GM23248 (cell line): ENCODE measurements at regions of chr10 and their contacts with region 1.

Region 1: DNA sequence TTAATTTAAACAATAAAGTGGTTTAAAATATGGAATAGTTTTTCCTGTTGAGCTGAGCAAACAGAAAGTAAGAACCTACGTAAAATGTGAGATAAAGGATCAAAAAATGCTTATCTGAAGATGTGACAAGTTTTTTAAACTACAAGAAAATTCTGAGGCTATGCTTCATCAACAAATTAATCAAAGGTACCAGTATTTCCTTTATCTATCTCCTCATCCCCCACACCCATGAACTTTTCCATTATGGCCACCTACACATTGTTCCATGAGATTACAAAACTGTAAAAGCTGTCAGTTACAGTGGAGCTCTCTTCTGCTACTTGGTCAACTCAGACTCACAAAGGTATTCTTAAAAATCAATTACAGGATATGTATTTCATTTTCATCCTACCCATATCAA is 77.4 kb downstream of the ARHGAP12 start:
- DNase-seq: no peak
- H3K4me3 ChIP-seq: no peak overlapping the region
- H3K27ac ChIP-seq: no peak overlapping the region
- H3K4me1 ChIP-seq: no peaks in the 10 kb centered on the region
- H3K27me3 ChIP-seq: no peaks in the 10 kb centered on the region

Region 2: GRCh38 chr10:32005050-32005449 is 153.8 kb after region 1 on chr10:
- in situ Hi-C with region 1: loop called (anchors 10 kb)
- DNase-seq: peak; percentile 60
- H3K4me3 ChIP-seq: no peak overlapping the region
- H3K27ac ChIP-seq: no peak overlapping the region
- H3K4me1 ChIP-seq: peaks cover 10% of the 10 kb centered on the region; the same call in 1 of the 2 replicates
- H3K27me3 ChIP-seq: no peaks in the 10 kb centered on the region